GM12878 (cell line): ENCODE measurements at regions of chr1 and their contacts with region 1.

Region 1: GRCh38 chr1:15128520-15129313 is 24.8 kb upstream of the TMEM51 start:
- DNase-seq: peak; percentile 38
- ATAC-seq: peak; percentile 100
- H3K4me3 ChIP-seq: no peak overlapping the region
- H3K27ac ChIP-seq: no peak overlapping the region
- H3K4me1 ChIP-seq: no peaks in the 10 kb centered on the region
- H3K27me3 ChIP-seq: no peaks in the 10 kb centered on the region
- CTCF ChIP-seq: peak; percentile 92 to 96 (median 93)
- EP300 ChIP-seq: no peak
- POLR2A ChIP-seq: no peak
- RAD21 ChIP-seq: peak; percentile 95

Region 2: DNA sequence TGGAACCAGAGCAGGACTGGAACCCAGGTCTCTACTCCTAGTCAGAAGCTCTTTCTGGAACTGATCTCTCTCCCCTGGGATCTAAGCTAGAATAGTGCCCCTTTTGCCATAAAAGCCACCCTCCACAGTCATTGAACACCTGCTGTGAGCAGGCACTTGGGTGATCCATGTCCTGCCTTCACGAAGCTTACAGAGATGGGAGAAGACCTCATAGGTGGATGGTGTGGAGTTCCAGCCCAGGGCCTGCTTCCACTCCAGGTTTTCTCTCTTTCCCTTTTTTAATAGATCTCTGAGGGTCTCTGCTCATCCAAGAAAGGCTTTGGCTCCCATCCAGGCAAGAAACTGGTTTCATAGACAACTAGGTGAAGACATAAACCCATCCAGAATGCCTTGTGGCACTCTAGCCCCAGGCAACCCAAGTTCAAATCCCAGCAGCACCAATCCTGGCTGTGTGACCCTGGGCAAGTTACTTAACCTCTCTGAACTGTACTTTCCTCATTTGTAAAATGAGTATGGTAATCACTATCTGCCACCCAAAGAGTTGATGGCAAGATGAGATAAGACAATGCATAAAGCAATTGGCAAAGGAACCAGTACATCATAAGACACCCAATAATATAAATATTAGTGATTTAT is 21.5 kb before region 1 on chr1:
- CTCF ChIA-PET with region 1: interaction called, 10 read pairs
- POLR2A ChIA-PET with region 1: no interaction called
- RAD21 ChIA-PET with region 1: interaction called, 8 read pairs
- SMC1A ChIA-PET with region 1: interaction called, 5 read pairs
- in situ Hi-C with region 1: no loop called
- intact Hi-C with region 1: no loop called
- DNase-seq: no peak
- ATAC-seq: no peak
- H3K4me3 ChIP-seq: no peak overlapping the region
- H3K27ac ChIP-seq: no peak overlapping the region
- H3K4me1 ChIP-seq: no peaks in the 10 kb centered on the region; the same call in 1 of the 2 replicates
- H3K27me3 ChIP-seq: no peaks in the 10 kb centered on the region; a peak in 1 of 4 replicates
- CTCF ChIP-seq: no peak
- EP300 ChIP-seq: no peak
- POLR2A ChIP-seq: no peak
- RAD21 ChIP-seq: no peak

Region 3: DNA sequence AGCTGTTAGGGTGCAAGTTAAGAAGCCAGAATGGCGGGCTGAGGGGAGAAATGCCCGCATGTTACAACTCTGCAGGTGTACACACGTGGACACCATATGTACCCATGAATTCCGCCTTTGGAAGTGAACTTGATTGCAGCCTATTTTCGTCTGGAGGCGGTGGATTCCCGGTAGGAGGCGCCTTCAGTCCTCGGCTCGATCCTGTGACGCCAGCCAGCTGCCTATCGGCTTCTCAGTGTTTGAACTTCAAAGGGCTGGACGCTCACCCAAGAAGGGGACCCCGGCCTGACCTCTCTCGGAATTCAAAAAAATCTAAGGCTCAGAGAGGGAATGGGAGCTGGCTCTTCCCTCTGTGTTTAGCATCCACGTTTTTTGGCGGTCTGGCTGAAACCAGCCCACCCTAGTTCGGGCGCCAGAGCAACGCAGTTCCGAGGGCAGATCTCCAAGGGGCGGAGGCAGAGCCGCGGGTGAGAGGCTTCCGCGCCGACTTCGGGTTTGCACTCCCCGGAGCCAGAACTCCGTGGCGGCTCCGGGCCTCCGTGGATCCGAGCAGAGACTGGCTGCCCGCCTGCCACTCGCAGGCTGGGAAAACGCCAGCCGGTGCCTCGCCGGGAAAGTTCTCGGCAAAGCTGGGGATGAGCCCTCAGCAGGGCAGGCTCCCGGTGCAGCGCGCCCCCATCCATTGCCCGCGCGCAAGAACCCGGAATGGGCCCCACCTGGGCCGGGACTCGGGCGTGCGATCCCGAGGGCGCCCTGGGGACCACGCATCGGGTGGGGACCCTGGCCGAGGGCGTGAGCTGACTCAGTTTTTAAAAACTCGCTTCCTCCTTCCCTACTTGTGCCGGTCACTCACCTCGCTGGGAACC is 23.8 kb after region 1 on chr1:
- CTCF ChIA-PET with region 1: interaction called, 15 read pairs
- POLR2A ChIA-PET with region 1: no interaction called
- RAD21 ChIA-PET with region 1: interaction called, 22 read pairs
- SMC1A ChIA-PET with region 1: interaction called, 30 read pairs
- in situ Hi-C with region 1: no loop called
- intact Hi-C with region 1: no loop called
- DNase-seq: no peak
- ATAC-seq: no peak
- H3K4me3 ChIP-seq: peak overlapping the region; percentile 67
- H3K27ac ChIP-seq: no peak overlapping the region
- H3K4me1 ChIP-seq: peaks cover 25% of the 10 kb centered on the region
- H3K27me3 ChIP-seq: peaks cover 10 to 16% of the 10 kb centered on the region in 2 experiments; a peak in 3 of 4 replicates
- CTCF ChIP-seq: peak; percentile 26 to 72 (median 30); a peak in 4 of 6 replicates
- EP300 ChIP-seq: no peak
- POLR2A ChIP-seq: no peak
- RAD21 ChIP-seq: peak; percentile 61

Region 4: DNA sequence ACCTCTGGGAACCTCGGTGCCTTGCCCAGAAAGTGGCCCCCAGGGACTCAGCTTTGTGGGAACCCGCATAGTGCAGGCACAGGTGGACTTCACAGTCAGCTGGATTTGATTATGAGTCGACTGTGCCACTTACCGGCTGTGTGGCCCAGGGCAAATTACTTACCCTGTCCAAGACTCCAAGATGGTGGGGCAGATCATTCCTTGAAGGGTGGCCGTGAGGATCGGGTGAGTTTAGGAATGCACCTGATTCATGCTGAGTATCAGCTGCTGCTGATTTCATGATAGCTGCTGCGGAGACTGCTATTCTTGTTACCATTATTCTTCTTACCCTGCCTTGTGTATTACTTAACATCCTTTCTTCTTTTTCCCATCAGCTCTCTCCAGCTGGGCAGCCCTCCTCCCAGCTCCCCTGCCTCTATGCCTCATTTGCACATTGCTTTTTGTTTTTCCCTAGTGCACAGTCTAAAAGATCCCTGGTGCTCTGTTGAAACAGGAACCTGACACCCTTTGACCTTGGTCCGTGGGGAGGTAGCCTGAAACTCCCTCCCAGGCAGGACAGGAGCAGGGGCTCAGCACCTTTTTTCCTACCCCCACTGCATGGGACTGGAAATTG is 77.8 kb after region 1 on chr1:
- CTCF ChIA-PET with region 1: interaction called, 10 read pairs
- POLR2A ChIA-PET with region 1: no interaction called
- RAD21 ChIA-PET with region 1: interaction called, 8 read pairs
- SMC1A ChIA-PET with region 1: interaction called, 6 read pairs
- in situ Hi-C with region 1: no loop called
- intact Hi-C with region 1: no loop called
- DNase-seq: peak; percentile 13
- ATAC-seq: no peak
- H3K4me3 ChIP-seq: no peak overlapping the region
- H3K27ac ChIP-seq: no peak overlapping the region
- H3K4me1 ChIP-seq: no peaks in the 10 kb centered on the region; the same call in 1 of the 2 replicates
- H3K27me3 ChIP-seq: no peaks in the 10 kb centered on the region
- CTCF ChIP-seq: no peak
- EP300 ChIP-seq: no peak
- POLR2A ChIP-seq: no peak
- RAD21 ChIP-seq: no peak

Region 5: GRCh38 chr1:15261155-15262002 is 132.7 kb after region 1 on chr1:
- CTCF ChIA-PET with region 1: interaction called, 9 read pairs
- POLR2A ChIA-PET with region 1: no interaction called
- RAD21 ChIA-PET with region 1: interaction called, 5 read pairs
- SMC1A ChIA-PET with region 1: interaction called, 20 read pairs
- in situ Hi-C with region 1: no loop called
- intact Hi-C with region 1: no loop called
- DNase-seq: no peak
- ATAC-seq: peak; percentile 78
- H3K4me3 ChIP-seq: peak overlapping the region; percentile 25; the same call in 1 of the 2 replicates
- H3K27ac ChIP-seq: peak overlapping the region; percentile 63
- H3K4me1 ChIP-seq: peaks cover 21% of the 10 kb centered on the region
- H3K27me3 ChIP-seq: no peaks in the 10 kb centered on the region
- CTCF ChIP-seq: no peak
- EP300 ChIP-seq: 0 out of 4 replicates have a peak, but pooled peaks of 1 of the 2 experiments have one; percentile 3
- POLR2A ChIP-seq: no peak
- RAD21 ChIP-seq: no peak

Region 6: DNA sequence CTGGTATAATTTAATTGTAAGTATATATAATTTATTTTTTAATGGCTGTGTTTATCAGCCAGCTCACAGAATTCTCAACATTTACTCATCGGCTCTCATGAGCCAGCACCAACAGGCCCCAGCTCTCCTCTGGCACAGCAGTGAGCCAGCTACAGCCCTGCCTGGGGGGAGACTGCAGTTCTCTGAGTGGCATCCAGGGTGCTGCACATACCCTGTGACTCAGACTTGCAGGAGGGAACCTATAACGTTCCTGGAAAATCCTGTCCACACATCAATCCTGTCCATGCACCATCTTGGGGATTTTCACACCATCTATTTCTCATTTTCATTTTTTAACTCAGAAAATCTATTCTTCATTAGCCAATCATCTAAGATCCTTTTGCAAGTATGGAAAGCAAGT is 154.8 kb after region 1 on chr1:
- CTCF ChIA-PET with region 1: interaction called, 31 read pairs
- POLR2A ChIA-PET with region 1: no interaction called
- RAD21 ChIA-PET with region 1: interaction called, 12 read pairs
- SMC1A ChIA-PET with region 1: interaction called, 5 read pairs
- in situ Hi-C with region 1: no loop called
- intact Hi-C with region 1: no loop called
- DNase-seq: no peak
- ATAC-seq: peak; percentile 30; the same call in 1 of the 3 replicates
- H3K4me3 ChIP-seq: no peak overlapping the region
- H3K27ac ChIP-seq: no peak overlapping the region
- H3K4me1 ChIP-seq: no peaks in the 10 kb centered on the region
- H3K27me3 ChIP-seq: no peaks in the 10 kb centered on the region
- CTCF ChIP-seq: no peak
- EP300 ChIP-seq: no peak
- POLR2A ChIP-seq: no peak
- RAD21 ChIP-seq: no peak

Region 7: GRCh38 chr1:15304701-15305467 is 176.2 kb after region 1 on chr1:
- CTCF ChIA-PET with region 1: interaction called, 105 read pairs
- POLR2A ChIA-PET with region 1: no interaction called
- RAD21 ChIA-PET with region 1: interaction called, 33 read pairs
- SMC1A ChIA-PET with region 1: interaction called, 37 read pairs
- in situ Hi-C with region 1: loop called (anchors 10 kb)
- intact Hi-C with region 1: loop called (anchors 1 kb)
- DNase-seq: no peak
- ATAC-seq: peak; percentile 85
- H3K4me3 ChIP-seq: no peak overlapping the region
- H3K27ac ChIP-seq: no peak overlapping the region
- H3K4me1 ChIP-seq: no peaks in the 10 kb centered on the region
- H3K27me3 ChIP-seq: no peaks in the 10 kb centered on the region; a peak in 1 of 4 replicates
- CTCF ChIP-seq: peak; percentile 87 to 92 (median 88)
- EP300 ChIP-seq: no peak
- POLR2A ChIP-seq: no peak
- RAD21 ChIP-seq: peak; percentile 84